Activated naive CD4-positive, alpha-beta T cell treated with anti-CD3 and anti-CD28 coated beads for 36 hours (primary cell): ENCODE measurements at regions of chr1 and their contacts with region 1.

Region 1: GRCh38 chr1:236795035-236795756 is at the start of gene MTR:
- DNase-seq: peak; percentile 98
- H3K4me3 Mint-ChIP-seq: peak within 1 kb of the TSS; percentile 80
- H3K27ac Mint-ChIP-seq: peak within 1 kb of the TSS; percentile 86
- H3K4me1 Mint-ChIP-seq: peaks cover 27% of the 10 kb centered on the region
- H3K27me3 Mint-ChIP-seq: no peaks in the 10 kb centered on the region
- total RNA-seq, gene MTR: 55.3 to 57.6 TPM

Region 2: GRCh38 chr1:236142253-236143103 is 652.7 kb before region 1 on chr1 and contains the start of gene GPR137B:
- CTCF ChIA-PET with region 1: no interaction called
- intact Hi-C with region 1: loop called (anchors 1 kb)
- DNase-seq: peak; percentile 74
- H3K4me3 Mint-ChIP-seq: peak within 1 kb of the TSS; percentile 87
- H3K27ac Mint-ChIP-seq: no peak within 1 kb of the TSS
- H3K4me1 Mint-ChIP-seq: peaks cover 9% of the 10 kb centered on the region
- H3K27me3 Mint-ChIP-seq: peaks cover 37% of the 10 kb centered on the region
- total RNA-seq, gene GPR137B: 1.6 to 2.4 TPM

Region 3: DNA sequence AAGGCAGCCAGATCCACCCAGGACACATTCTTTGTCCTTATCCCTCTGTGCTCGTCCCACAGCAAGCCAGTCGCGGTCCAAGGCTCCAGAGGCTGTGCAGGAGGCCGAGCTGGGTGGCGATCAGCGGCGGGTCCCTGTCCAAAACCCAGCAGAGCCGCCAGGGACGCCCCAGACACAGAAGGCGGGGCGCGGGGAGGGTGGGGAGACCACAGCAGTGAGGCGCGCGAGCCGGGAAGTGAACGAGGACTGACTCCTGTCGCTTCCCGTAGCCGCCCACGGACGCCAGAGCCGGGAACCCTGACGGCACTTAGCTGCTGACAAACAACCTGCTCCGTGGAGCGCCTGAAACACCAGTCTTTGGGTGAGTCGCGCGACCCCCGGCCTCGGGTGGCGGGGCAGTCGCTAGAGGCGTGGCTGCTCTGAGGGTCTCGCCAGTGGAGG is 271.5 kb before region 1 on chr1 and contains the start of gene LGALS8:
- CTCF ChIA-PET with region 1: no interaction called
- intact Hi-C with region 1: loop called (anchors 1 kb)
- DNase-seq: peak; percentile 91
- H3K4me3 Mint-ChIP-seq: peak within 1 kb of the TSS; percentile 96
- H3K27ac Mint-ChIP-seq: peak within 1 kb of the TSS; percentile 97
- H3K4me1 Mint-ChIP-seq: peaks cover 9% of the 10 kb centered on the region
- H3K27me3 Mint-ChIP-seq: no peaks in the 10 kb centered on the region
- total RNA-seq, gene LGALS8: 78.6 to 89.4 TPM

Region 4: GRCh38 chr1:236659792-236660587 is 135.2 kb before region 1 on chr1:
- CTCF ChIA-PET with region 1: no interaction called
- intact Hi-C with region 1: no loop called
- DNase-seq: no peak
- H3K4me3 Mint-ChIP-seq: no peak overlapping the region
- H3K27ac Mint-ChIP-seq: no peak overlapping the region
- H3K4me1 Mint-ChIP-seq: peaks cover 5% of the 10 kb centered on the region
- H3K27me3 Mint-ChIP-seq: peaks cover 10% of the 10 kb centered on the region

Region 5: GRCh38 chr1:236685917-236686814 is 109.0 kb before region 1 on chr1 and contains the start of gene ACTN2:
- CTCF ChIA-PET with region 1: no interaction called
- intact Hi-C with region 1: loop called (anchors 2 kb)
- DNase-seq: peak; percentile 41
- H3K4me3 Mint-ChIP-seq: peak within 1 kb of the TSS; percentile 58
- H3K27ac Mint-ChIP-seq: no peak within 1 kb of the TSS
- H3K4me1 Mint-ChIP-seq: peaks cover 18% of the 10 kb centered on the region
- H3K27me3 Mint-ChIP-seq: peaks cover 41% of the 10 kb centered on the region
- total RNA-seq, gene ACTN2: 0.36 TPM in 1 of 2 experiments, not detected in the other

Region 6: GRCh38 chr1:236861560-236862218 is 66.5 kb after region 1 on chr1:
- CTCF ChIA-PET with region 1: no interaction called
- intact Hi-C with region 1: loop called (anchors 2 kb)
- DNase-seq: no peak
- H3K4me3 Mint-ChIP-seq: no peak overlapping the region
- H3K27ac Mint-ChIP-seq: peak overlapping the region; percentile 27
- H3K4me1 Mint-ChIP-seq: peaks cover 30% of the 10 kb centered on the region
- H3K27me3 Mint-ChIP-seq: no peaks in the 10 kb centered on the region